CD8-positive, alpha-beta T cell (primary cell): ENCODE measurements at regions of chr10 and their contacts with region 1.

Region 1: DNA sequence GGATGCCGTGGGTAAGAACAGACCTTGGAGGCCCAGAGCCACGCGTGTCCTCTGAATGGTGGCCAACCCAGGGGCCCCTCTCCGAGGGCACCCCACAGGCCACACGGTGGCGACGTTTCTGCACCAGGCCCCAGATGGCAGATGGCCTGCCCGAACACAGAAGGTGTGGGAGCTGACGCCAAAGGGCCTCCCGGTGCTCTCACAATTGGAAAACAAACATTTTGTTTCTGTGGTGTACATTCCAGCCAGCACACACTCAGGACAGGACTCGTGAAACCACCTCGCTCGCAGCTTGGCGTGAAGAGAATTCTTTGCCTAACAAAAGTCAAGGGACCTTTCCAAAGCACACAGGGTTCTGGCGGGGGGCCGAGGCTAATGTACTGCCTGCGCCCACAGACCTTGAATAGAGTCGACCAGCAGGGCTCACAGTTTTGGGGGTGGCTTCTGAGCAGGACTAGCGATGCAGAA is 112.1 kb downstream of the FAM53B start:
- DNase-seq: peak in 6 of 9 experiments; percentile 43 to 73 (median 62)
- ATAC-seq: peak; percentile 30
- H3K4me3 ChIP-seq: no peak overlapping the region
- H3K4me3 Mint-ChIP-seq: no peak overlapping the region
- H3K27ac ChIP-seq: peak overlapping the region in 1 of 2 experiments; percentile 26
- H3K27ac Mint-ChIP-seq: peak overlapping the region; percentile 45
- H3K4me1 ChIP-seq: peaks cover 53% of the 10 kb centered on the region
- H3K4me1 Mint-ChIP-seq: peaks cover 64% of the 10 kb centered on the region
- H3K27me3 ChIP-seq: no peaks in the 10 kb centered on the region
- H3K27me3 Mint-ChIP-seq: no peaks in the 10 kb centered on the region
- CTCF ChIP-seq: peak; percentile 42

Region 2: GRCh38 chr10:124221356-124222317 is 410.5 kb before region 1 on chr10:
- CTCF ChIA-PET with region 1: no interaction called
- POLR2A ChIA-PET with region 1: no interaction called
- intact Hi-C with region 1: no loop called
- DNase-seq: no peak
- ATAC-seq: no peak
- H3K4me3 ChIP-seq: no peak overlapping the region
- H3K4me3 Mint-ChIP-seq: no peak overlapping the region
- H3K27ac ChIP-seq: no peak overlapping the region
- H3K27ac Mint-ChIP-seq: no peak overlapping the region
- H3K4me1 ChIP-seq: no peaks in the 10 kb centered on the region
- H3K4me1 Mint-ChIP-seq: peaks cover 2% of the 10 kb centered on the region
- H3K27me3 ChIP-seq: peaks cover 0 to 2% of the 10 kb centered on the region in 2 experiments
- H3K27me3 Mint-ChIP-seq: peaks cover 2% of the 10 kb centered on the region
- CTCF ChIP-seq: no peak

Region 3: GRCh38 chr10:124677749-124678556 is 45.9 kb after region 1 on chr10:
- CTCF ChIA-PET with region 1: interaction called, 6 read pairs
- POLR2A ChIA-PET with region 1: interaction called, 3 read pairs
- intact Hi-C with region 1: loop called in 1 of 2 experiments (anchors 5 kb)
- DNase-seq: peak in 1 of 9 experiments; percentile 41
- ATAC-seq: peak; percentile 26
- H3K4me3 ChIP-seq: peak overlapping the region; percentile 27 to 40
- H3K4me3 Mint-ChIP-seq: peak overlapping the region; percentile 76
- H3K27ac ChIP-seq: peak overlapping the region in 1 of 2 experiments; percentile 57
- H3K27ac Mint-ChIP-seq: peak overlapping the region; percentile 91
- H3K4me1 ChIP-seq: peaks cover 86% of the 10 kb centered on the region
- H3K4me1 Mint-ChIP-seq: peaks cover 86% of the 10 kb centered on the region
- H3K27me3 ChIP-seq: no peaks in the 10 kb centered on the region
- H3K27me3 Mint-ChIP-seq: no peaks in the 10 kb centered on the region
- CTCF ChIP-seq: no peak

Region 4: GRCh38 chr10:124748166-124748565 is 116.1 kb after region 1 on chr10:
- CTCF ChIA-PET with region 1: interaction called, 73 read pairs
- POLR2A ChIA-PET with region 1: interaction called, 4 read pairs
- intact Hi-C with region 1: no loop called
- DNase-seq: no peak
- ATAC-seq: no peak
- H3K4me3 ChIP-seq: no peak overlapping the region
- H3K4me3 Mint-ChIP-seq: no peak overlapping the region
- H3K27ac ChIP-seq: no peak overlapping the region
- H3K27ac Mint-ChIP-seq: no peak overlapping the region
- H3K4me1 ChIP-seq: peaks cover 3% of the 10 kb centered on the region
- H3K4me1 Mint-ChIP-seq: peaks cover 16% of the 10 kb centered on the region
- H3K27me3 ChIP-seq: no peaks in the 10 kb centered on the region
- H3K27me3 Mint-ChIP-seq: no peaks in the 10 kb centered on the region
- CTCF ChIP-seq: no peak